ENCODE measurements at regions of chr11 and their contacts with region 1.

Region 1: DNA sequence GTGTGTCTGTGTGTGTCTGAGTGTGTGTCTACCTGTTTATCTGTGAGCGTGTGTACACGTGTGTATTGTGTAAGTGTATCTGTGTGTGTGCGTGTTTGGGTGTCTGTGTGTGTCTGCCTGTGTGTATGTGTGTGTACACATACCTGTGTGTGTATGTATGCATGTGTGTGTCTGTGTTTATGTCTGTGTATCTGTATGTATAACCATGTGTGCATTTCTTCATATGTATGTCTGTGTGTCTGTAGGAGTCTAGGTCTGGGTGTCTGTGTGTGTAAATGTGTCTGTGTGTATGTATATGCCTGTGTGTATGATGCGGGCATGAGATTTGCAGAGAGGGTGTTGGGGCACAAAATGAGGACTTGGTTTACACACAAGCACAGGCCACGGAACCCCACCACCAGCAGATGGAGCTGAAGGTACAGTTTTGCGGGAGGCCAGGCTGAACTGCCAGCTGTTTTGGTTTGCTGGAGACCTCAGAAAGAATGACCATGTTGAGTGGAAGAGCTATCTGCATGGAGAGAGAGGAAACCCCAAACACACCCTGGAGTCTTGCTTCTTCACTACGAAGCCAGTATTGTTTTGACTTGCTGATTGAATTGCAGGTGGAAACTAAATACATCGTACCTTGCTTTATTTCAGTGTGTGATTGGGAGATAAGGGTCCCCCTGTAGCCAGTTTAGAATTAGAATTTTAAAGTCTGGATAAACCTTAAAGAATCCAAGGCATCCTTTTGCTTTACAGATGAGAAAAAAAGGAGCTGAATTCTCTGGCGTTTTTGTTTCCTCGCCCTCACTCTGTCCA is 497.2 kb downstream of the NTM start:
- DNase-seq: peak; percentile 77
- ATAC-seq: peak; percentile 79
- H3K4me3 ChIP-seq: no peak overlapping the region
- H3K27ac ChIP-seq: no peak overlapping the region
- H3K4me1 ChIP-seq: no peaks in the 10 kb centered on the region
- H3K27me3 ChIP-seq: no peaks in the 10 kb centered on the region
- CTCF ChIP-seq: peak; percentile 87

Region 2: GRCh38 chr11:131734871-131735270 is 132.8 kb before region 1 on chr11:
- CTCF ChIA-PET with region 1: no interaction called
- POLR2A ChIA-PET with region 1: no interaction called
- intact Hi-C with region 1: no loop called
- DNase-seq: no peak
- ATAC-seq: no peak
- H3K4me3 ChIP-seq: no peak overlapping the region
- H3K27ac ChIP-seq: no peak overlapping the region
- H3K4me1 ChIP-seq: no peaks in the 10 kb centered on the region
- H3K27me3 ChIP-seq: peaks cover 69% of the 10 kb centered on the region
- CTCF ChIP-seq: no peak

Region 3: GRCh38 chr11:131977231-131977630 is 109.6 kb after region 1 on chr11:
- CTCF ChIA-PET with region 1: no interaction called
- POLR2A ChIA-PET with region 1: no interaction called
- intact Hi-C with region 1: no loop called
- DNase-seq: peak; percentile 75
- ATAC-seq: peak; percentile 62
- H3K4me3 ChIP-seq: peak overlapping the region; percentile 6; the same call in 1 of the 2 replicates
- H3K27ac ChIP-seq: peak overlapping the region; percentile 51
- H3K4me1 ChIP-seq: peaks cover 19% of the 10 kb centered on the region
- H3K27me3 ChIP-seq: no peaks in the 10 kb centered on the region
- CTCF ChIP-seq: no peak

Region 4: DNA sequence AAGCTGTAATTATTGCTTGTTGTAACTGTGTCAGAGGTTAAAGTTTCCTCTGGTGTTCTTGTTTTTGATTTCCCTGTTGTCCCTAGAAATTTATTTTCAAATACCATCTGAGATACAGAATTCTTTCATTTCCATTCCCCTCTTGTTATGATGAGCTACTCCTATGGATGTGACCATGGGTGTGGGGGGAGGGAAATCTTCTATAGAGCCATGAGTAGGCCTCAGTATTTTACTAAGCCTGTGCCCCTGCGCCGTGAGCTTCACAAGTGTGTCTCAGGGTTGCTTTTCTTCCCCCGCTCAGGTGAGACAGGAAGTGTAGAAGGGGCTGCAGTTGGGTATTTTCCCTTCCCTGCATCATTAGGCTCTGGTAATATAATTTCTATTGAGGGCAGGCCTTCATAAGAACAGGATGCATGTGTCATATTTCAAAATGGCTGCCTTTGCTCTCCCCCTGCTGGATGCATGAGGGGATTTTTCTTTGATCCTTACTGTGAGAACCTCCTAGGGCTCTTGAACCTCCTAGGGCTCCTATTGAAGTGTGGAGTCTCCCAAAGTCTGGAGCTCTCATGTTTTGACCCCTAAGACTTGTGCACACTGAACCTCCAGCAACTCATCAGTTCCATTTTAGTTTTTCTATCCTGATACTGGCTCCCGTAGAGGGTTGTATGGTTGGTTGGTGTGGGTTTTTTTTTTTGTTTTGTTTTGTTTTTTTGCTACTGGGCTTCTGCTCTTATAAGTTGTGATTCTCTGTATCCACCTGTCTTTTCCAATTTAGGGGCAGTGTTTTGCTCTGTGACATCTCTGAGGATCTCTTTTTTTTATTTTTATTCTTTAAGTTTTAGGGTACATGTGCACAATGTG is 161.0 kb after region 1 on chr11:
- CTCF ChIA-PET with region 1: no interaction called
- POLR2A ChIA-PET with region 1: no interaction called
- intact Hi-C with region 1: loop called (anchors 5 kb)
- DNase-seq: peak; percentile 44
- ATAC-seq: no peak
- H3K4me3 ChIP-seq: no peak overlapping the region
- H3K27ac ChIP-seq: no peak overlapping the region
- H3K4me1 ChIP-seq: peaks cover 12% of the 10 kb centered on the region
- H3K27me3 ChIP-seq: no peaks in the 10 kb centered on the region
- CTCF ChIP-seq: peak; percentile 62

Region 5: GRCh38 chr11:132114185-132114584 is 246.5 kb after region 1 on chr11:
- CTCF ChIA-PET with region 1: no interaction called
- POLR2A ChIA-PET with region 1: no interaction called
- intact Hi-C with region 1: loop called (anchors 5 kb)
- DNase-seq: peak; percentile 55
- ATAC-seq: peak; percentile 37; the same call in 1 of the 2 replicates
- H3K4me3 ChIP-seq: no peak overlapping the region
- H3K27ac ChIP-seq: no peak overlapping the region
- H3K4me1 ChIP-seq: peaks cover 14% of the 10 kb centered on the region
- H3K27me3 ChIP-seq: no peaks in the 10 kb centered on the region
- CTCF ChIP-seq: peak; percentile 57

Region 6: GRCh38 chr11:132126973-132127899 is 259.6 kb after region 1 on chr11:
- CTCF ChIA-PET with region 1: interaction called, 9 read pairs
- POLR2A ChIA-PET with region 1: no interaction called
- intact Hi-C with region 1: loop called (anchors 1 kb)
- DNase-seq: peak; percentile 70
- ATAC-seq: peak; percentile 58
- H3K4me3 ChIP-seq: 0 out of 2 replicates have a peak overlapping the region, but pooled peaks have one; percentile 21
- H3K27ac ChIP-seq: no peak overlapping the region
- H3K4me1 ChIP-seq: peaks cover 8% of the 10 kb centered on the region
- H3K27me3 ChIP-seq: no peaks in the 10 kb centered on the region
- CTCF ChIP-seq: peak; percentile 78

Region 7: DNA sequence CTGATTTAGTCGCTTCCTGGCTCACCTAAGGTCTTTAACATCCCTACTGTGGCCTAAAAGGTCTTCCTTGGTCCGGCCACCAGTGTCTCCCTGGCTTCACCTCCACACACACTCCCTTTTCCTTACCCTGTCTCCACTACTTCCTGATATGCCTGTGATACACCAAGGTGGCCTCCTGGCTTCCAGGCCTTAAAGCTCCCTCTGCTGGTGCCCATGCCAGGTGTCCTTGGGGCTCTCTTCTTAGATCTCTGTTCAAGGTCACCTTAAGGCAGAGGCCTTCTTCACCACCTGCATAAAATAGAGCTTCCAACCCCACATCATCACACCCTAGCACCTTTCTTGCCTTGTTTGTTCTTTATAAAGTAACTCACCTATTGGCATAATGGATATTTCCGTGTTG is 290.4 kb after region 1 on chr11:
- CTCF ChIA-PET with region 1: no interaction called
- POLR2A ChIA-PET with region 1: interaction called, 11 read pairs
- intact Hi-C with region 1: no loop called
- DNase-seq: peak; percentile 50
- ATAC-seq: peak; percentile 80
- H3K4me3 ChIP-seq: no peak overlapping the region
- H3K27ac ChIP-seq: no peak overlapping the region
- H3K4me1 ChIP-seq: no peaks in the 10 kb centered on the region
- H3K27me3 ChIP-seq: no peaks in the 10 kb centered on the region
- CTCF ChIP-seq: peak; percentile 70

Measured in PC-3 (cell line).